Activated T-helper 1 cell treated with anti-CD3 and anti-CD28 coated beads, Interleukin-12 subunit alpha, Interleukin-12 subunit beta, Interleukin-2, Interleukin-4 antibody, amounts not matched to agents 30 ng/mL and 10 ng/mL and 1 ng/mL, durations not matched to agents 14 hours and 24 hours and 36 hours (primary cell): ENCODE measurements at regions of chr15 and their contacts with region 1.

Region 1: DNA sequence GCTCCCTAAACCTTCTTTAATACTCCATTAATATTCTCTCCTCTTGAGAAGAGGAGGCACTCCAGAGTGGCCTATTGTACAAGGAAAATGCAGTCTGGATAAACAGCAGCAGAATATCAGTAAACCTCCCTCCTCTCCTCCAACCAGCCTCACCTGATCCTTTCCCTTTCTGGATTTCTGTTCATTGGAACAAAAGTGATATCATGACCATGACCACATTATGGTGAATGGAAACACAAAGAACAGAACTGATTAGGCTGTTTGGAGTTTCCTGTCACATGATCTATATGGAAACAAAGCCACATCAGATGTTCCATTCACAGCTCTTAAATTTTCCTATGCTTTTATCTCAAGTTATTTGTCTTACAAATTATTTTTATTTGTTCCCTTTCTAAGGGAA is 14.6 kb downstream of the C2CD4B start:
- DNase-seq: no peak
- H3K4me3 Mint-ChIP-seq: no peak overlapping the region
- H3K27ac Mint-ChIP-seq: peak overlapping the region; percentile 33
- H3K4me1 Mint-ChIP-seq: peaks cover 24% of the 10 kb centered on the region
- H3K27me3 Mint-ChIP-seq: peaks cover 2% of the 10 kb centered on the region

Region 2: DNA sequence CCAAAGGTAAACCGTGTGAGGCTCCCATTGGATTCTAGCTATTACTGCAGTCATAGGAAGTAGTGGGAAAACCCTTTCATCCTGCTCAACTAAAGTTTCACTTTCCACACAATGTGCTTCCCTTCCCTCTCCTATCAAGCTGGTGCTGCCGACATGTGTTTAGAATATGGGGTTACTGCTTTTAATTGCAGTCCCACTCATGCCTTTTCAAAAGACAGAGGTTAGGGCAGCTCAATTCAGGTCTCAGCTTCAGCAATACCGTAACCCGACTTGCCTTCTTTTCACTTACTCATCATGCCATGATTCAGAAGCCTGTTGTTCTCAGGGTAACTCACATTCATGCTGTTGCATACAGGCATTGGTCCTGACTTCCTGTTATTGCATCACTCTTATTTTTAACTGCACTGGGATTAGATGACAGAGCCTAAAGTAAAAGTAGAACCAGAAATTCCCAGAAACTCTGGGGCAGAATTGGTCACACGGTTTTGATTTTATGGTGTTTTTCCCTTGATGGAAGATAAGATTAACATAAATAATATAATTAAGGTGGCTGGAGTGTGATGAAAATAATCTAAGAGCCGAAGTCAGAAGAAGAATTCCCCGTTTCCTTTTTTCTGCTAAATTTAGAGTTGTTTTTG is 31.1 kb before region 1 on chr15:
- intact Hi-C with region 1: loop called (anchors 1 kb)
- DNase-seq: peak; percentile 5
- H3K4me3 Mint-ChIP-seq: peak overlapping the region; percentile 30
- H3K27ac Mint-ChIP-seq: peak overlapping the region; percentile 28
- H3K4me1 Mint-ChIP-seq: peaks cover 42% of the 10 kb centered on the region
- H3K27me3 Mint-ChIP-seq: peaks cover 2% of the 10 kb centered on the region

Region 3: DNA sequence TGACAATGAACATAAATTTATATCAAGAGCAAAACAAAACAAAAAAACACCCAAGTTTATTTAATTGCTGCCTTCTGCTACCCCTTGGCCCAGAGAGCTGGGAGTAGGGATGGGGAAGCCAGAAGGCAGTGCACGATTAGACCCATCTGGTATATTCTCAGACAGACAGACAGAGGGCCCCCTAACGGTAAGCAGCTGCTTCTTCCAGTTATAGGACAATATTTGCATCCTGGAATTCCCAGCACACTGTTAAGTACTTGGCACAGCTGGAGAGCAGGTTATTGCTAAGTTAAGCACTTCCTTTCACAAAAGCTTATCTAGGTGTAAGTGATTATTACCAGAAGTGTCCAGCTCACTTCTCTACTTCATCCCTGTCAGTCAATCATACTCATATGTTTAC is 24.7 kb before region 1 on chr15:
- intact Hi-C with region 1: loop called (anchors 1 kb)
- DNase-seq: no peak
- H3K4me3 Mint-ChIP-seq: no peak overlapping the region
- H3K27ac Mint-ChIP-seq: peak overlapping the region; percentile 9
- H3K4me1 Mint-ChIP-seq: peaks cover 47% of the 10 kb centered on the region
- H3K27me3 Mint-ChIP-seq: peaks cover 14% of the 10 kb centered on the region

Region 4: DNA sequence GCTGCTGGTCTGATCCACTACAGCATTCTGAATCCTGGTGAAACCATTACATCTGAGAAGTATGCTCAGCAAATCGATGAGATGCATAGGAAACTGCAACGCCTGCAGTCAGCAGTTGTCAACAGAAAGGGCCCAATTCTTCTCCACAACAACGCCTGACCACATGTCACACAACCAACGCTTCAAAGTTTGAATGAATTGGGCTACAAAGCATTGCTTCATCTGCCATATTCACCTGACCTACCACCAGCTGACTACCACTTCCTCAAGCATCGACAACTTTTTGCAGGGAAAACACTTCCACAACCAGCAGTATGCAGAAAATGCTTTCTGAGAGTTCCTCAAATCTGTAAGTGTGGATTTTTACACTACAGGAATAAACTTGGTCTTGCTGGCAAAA is 69.4 kb after region 1 on chr15:
- intact Hi-C with region 1: loop called (anchors 10 kb)
- DNase-seq: no peak
- H3K4me3 Mint-ChIP-seq: no peak overlapping the region
- H3K27ac Mint-ChIP-seq: no peak overlapping the region
- H3K4me1 Mint-ChIP-seq: no peaks in the 10 kb centered on the region
- H3K27me3 Mint-ChIP-seq: no peaks in the 10 kb centered on the region